Activated CD8-positive, alpha-beta T cell treated with anti-CD3 and anti-CD28 coated beads, Interleukin-2, amount 10 ng/mL, durations not matched to agents 7 days and 5 days (primary cell): ENCODE measurements at regions of chr12 and their contacts with region 1.

Region 1: DNA sequence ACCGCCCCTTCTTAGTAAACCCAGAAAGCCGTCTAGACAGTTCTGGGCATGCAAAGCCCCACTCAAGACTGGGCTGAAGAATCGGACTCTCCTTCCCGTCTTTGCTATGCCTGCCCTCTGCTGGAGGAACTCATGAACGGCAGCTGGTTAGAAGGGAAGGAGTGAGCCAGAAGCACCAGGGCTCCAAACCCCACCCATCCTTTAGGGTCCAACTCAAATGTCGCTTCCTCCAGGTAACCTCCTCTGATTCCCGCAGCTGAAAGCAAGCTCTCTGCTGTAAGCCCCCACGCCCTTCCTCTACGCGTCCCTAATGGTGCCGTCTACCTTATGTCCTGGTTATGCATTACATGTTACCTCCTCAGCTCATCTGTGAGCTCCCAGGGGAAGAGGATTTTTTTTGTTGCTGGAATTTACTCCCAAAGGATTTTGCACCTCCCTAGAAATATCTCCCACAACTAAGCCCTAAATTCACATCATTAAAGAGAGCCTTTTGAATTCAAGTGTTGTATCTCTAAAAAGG is 59.0 kb upstream of the SCN8A start:
- DNase-seq: peak; percentile 86
- ATAC-seq: peak; percentile 97
- H3K4me3 Mint-ChIP-seq: no peak overlapping the region
- H3K27ac Mint-ChIP-seq: no peak overlapping the region
- H3K4me1 Mint-ChIP-seq: peaks cover 11% of the 10 kb centered on the region
- H3K27me3 Mint-ChIP-seq: peaks cover 23% of the 10 kb centered on the region

Region 2: GRCh38 chr12:51430231-51430906 is 101.7 kb before region 1 on chr12:
- CTCF ChIA-PET with region 1: interaction called, 135 read pairs
- POLR2A ChIA-PET with region 1: no interaction called
- DNase-seq: no peak
- ATAC-seq: no peak
- H3K4me3 Mint-ChIP-seq: no peak overlapping the region
- H3K27ac Mint-ChIP-seq: no peak overlapping the region
- H3K4me1 Mint-ChIP-seq: peaks cover 15% of the 10 kb centered on the region
- H3K27me3 Mint-ChIP-seq: peaks cover 5% of the 10 kb centered on the region

Region 3: DNA sequence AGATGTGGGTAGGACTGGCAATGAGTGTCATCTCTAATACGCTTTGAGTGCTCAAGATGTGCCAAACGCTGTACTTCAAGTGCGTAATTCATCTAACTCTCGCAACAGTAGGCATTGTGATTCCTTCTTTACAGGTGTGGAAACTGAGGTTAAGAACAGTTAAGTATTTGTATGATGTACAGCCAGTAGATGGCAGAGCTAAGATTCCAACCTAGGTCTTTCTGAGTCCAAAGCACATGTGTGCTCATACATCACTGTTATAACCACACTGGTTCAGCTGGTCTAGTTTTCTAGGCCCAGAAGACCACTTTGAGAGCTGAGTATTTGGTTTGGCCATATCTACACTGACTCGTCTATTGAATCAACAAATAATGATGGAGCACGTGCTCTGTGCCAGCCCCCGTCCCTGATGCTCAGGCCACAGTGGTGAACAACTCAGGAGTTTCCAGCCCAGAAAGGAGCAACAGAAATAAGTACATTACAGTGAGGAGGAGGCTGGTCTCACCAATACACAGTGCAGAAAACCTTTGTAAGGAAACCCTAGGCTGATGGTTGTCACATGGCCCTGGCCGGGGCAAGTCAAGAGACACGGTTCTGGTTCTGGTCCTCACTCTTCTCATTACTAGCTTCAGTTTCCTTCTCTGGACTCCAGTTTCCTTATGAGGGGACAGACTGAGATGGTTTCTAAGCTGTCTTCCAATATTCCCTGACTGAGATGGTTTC is 10.3 kb before region 1 on chr12:
- CTCF ChIA-PET with region 1: interaction called, 37 read pairs
- POLR2A ChIA-PET with region 1: no interaction called
- DNase-seq: no peak
- ATAC-seq: no peak
- H3K4me3 Mint-ChIP-seq: no peak overlapping the region
- H3K27ac Mint-ChIP-seq: no peak overlapping the region
- H3K4me1 Mint-ChIP-seq: no peaks in the 10 kb centered on the region
- H3K27me3 Mint-ChIP-seq: peaks cover 3% of the 10 kb centered on the region

Region 4: DNA sequence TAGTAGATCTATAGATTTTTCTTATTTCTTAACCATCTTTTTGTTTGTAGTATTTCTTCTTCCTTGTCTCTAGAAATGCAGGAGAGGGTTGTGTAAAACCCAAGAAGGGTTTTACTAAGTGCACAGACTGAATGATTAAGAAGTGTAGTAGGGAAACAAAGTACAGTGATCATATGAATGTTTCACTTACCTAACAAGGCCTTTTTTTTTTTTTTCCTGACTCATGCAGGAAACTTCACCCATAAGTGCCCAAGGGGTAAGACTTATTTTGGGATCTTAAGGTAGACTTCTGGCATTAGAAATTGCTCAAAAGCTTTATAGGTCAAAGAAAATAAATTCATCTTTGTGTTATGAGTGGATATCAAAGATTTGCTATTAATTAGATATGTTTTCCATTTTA is 69.2 kb after region 1 on chr12:
- CTCF ChIA-PET with region 1: no interaction called
- POLR2A ChIA-PET with region 1: no interaction called
- DNase-seq: no peak
- ATAC-seq: no peak
- H3K4me3 Mint-ChIP-seq: no peak overlapping the region
- H3K27ac Mint-ChIP-seq: no peak overlapping the region
- H3K4me1 Mint-ChIP-seq: no peaks in the 10 kb centered on the region
- H3K27me3 Mint-ChIP-seq: peaks cover 27% of the 10 kb centered on the region

Region 5: GRCh38 chr12:51631591-51631990 is 99.6 kb after region 1 on chr12:
- CTCF ChIA-PET with region 1: no interaction called
- POLR2A ChIA-PET with region 1: no interaction called
- DNase-seq: no peak
- ATAC-seq: no peak
- H3K4me3 Mint-ChIP-seq: no peak overlapping the region
- H3K27ac Mint-ChIP-seq: no peak overlapping the region
- H3K4me1 Mint-ChIP-seq: no peaks in the 10 kb centered on the region
- H3K27me3 Mint-ChIP-seq: peaks cover 15% of the 10 kb centered on the region